Activated CD8-positive, alpha-beta T cell treated with anti-CD3 and anti-CD28 coated beads for 36 hours (primary cell): ENCODE measurements at regions of chr22 and their contacts with region 1.

Region 1: DNA sequence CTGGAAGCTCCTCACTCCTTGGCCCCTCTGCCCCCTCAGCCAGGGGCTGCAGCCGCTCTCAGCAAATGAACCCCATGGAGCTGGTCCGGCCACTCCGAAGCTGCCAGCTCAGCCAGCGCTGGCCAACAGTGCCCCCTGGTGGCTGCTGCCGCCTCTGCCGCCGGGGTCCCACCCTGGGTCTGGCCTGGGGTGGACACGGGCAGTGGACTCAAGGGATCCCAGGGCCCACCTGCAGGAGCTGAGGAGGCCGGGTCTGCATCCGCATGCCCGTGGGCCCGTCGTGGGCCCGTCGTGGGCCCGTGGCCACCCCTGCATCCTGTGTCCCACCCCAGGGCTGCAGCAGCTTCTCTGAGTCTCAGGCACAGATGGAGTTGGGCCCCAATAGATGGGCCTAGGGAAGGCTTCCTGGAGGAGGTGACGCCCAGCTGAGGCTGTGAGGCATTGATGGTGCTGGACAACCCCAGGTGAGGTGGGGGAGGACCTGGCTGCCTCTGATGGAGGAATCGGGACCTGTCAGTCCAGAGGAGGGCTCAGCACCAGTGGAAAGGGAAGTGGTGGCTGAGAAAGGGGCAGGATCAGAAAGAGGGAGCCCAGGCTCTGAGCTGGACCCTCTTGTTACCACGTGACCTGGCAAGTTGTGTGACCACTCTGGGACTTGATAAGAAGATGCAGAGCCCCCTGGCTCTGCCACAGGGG is 522.3 kb downstream of the BRD1 start:
- DNase-seq: peak; percentile 70
- ATAC-seq: peak; percentile 60
- H3K4me3 Mint-ChIP-seq: no peak overlapping the region
- H3K27ac Mint-ChIP-seq: no peak overlapping the region
- H3K4me1 Mint-ChIP-seq: no peaks in the 10 kb centered on the region
- H3K27me3 Mint-ChIP-seq: peaks cover 13% of the 10 kb centered on the region
- CTCF ChIP-seq: peak; percentile 95

Region 2: GRCh38 chr22:48574776-48575565 is 730.4 kb before region 1 on chr22:
- CTCF ChIA-PET with region 1: interaction called, 5 read pairs
- POLR2A ChIA-PET with region 1: no interaction called
- intact Hi-C with region 1: loop called (anchors 10 kb)
- DNase-seq: peak; percentile 50
- ATAC-seq: peak; percentile 88
- H3K4me3 Mint-ChIP-seq: no peak overlapping the region
- H3K27ac Mint-ChIP-seq: no peak overlapping the region
- H3K4me1 Mint-ChIP-seq: peaks cover 2% of the 10 kb centered on the region
- H3K27me3 Mint-ChIP-seq: peaks cover 26% of the 10 kb centered on the region
- CTCF ChIP-seq: peak; percentile 46

Region 3: DNA sequence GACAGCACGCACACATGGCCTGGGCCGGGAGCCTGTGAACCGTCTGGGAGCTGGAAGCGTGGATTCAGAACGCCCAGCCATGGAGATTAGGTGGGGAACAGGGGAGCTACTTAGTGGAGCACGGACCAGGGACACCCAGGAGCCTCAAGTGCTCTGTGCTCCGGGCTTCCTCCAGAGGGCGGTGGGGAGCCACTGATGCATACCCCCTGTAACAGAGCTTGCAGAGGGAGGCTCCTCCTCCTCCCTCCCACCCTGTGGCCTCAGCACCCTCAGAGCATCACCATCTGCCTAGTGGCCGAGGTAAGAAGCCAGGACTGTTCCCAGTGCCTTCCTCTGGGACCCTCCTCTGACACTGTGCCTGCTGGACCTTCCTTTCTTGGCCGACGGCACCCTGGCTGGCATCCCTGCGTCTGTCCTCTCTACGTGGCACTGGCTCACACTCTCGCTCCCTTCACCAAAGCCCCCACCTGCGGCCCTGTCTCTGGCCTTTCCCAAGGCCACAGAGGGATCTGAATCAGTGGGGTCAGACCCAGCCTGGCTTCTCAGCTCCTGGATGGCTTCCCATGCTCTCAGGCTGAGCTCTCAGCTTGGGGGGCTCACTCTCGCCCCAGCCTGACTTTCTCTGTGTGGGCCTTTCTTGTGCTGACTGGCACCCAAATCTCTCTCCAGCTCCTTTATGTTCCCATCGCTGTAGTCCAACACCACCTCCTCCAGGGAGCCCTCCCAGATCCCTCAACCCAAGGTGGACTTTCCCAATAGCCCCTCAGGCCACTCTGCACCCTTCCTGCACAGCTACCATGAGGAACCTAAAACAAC is 258.6 kb before region 1 on chr22:
- CTCF ChIA-PET with region 1: interaction called, 12 read pairs
- POLR2A ChIA-PET with region 1: interaction called, 3 read pairs
- intact Hi-C with region 1: no loop called
- DNase-seq: peak; percentile 71
- ATAC-seq: peak; percentile 77
- H3K4me3 Mint-ChIP-seq: no peak overlapping the region
- H3K27ac Mint-ChIP-seq: no peak overlapping the region
- H3K4me1 Mint-ChIP-seq: no peaks in the 10 kb centered on the region
- H3K27me3 Mint-ChIP-seq: peaks cover 4% of the 10 kb centered on the region
- CTCF ChIP-seq: no peak

Region 4: GRCh38 chr22:49340406-49340805 is 35.0 kb after region 1 on chr22:
- CTCF ChIA-PET with region 1: no interaction called
- POLR2A ChIA-PET with region 1: no interaction called
- intact Hi-C with region 1: no loop called
- DNase-seq: no peak
- ATAC-seq: no peak
- H3K4me3 Mint-ChIP-seq: no peak overlapping the region
- H3K27ac Mint-ChIP-seq: no peak overlapping the region
- H3K4me1 Mint-ChIP-seq: no peaks in the 10 kb centered on the region
- H3K27me3 Mint-ChIP-seq: peaks cover 8% of the 10 kb centered on the region
- CTCF ChIP-seq: no peak